Activated naive CD4-positive, alpha-beta T cell treated with anti-CD3 and anti-CD28 coated beads for 36 hours (primary cell): ENCODE measurements at regions of chr14 and their contacts with region 1.

Region 1: GRCh38 chr14:23379366-23380196 is 2.7 kb downstream of the CMTM5 start:
- DNase-seq: peak; percentile 66
- H3K4me3 Mint-ChIP-seq: no peak overlapping the region
- H3K27ac Mint-ChIP-seq: no peak overlapping the region
- H3K4me1 Mint-ChIP-seq: no peaks in the 10 kb centered on the region
- H3K27me3 Mint-ChIP-seq: no peaks in the 10 kb centered on the region

Region 2: GRCh38 chr14:23259426-23259825 is 120.2 kb before region 1 on chr14:
- CTCF ChIA-PET with region 1: interaction called, 27 read pairs
- intact Hi-C with region 1: no loop called
- DNase-seq: no peak
- H3K4me3 Mint-ChIP-seq: no peak overlapping the region
- H3K27ac Mint-ChIP-seq: no peak overlapping the region
- H3K4me1 Mint-ChIP-seq: no peaks in the 10 kb centered on the region
- H3K27me3 Mint-ChIP-seq: peaks cover 14% of the 10 kb centered on the region

Region 3: DNA sequence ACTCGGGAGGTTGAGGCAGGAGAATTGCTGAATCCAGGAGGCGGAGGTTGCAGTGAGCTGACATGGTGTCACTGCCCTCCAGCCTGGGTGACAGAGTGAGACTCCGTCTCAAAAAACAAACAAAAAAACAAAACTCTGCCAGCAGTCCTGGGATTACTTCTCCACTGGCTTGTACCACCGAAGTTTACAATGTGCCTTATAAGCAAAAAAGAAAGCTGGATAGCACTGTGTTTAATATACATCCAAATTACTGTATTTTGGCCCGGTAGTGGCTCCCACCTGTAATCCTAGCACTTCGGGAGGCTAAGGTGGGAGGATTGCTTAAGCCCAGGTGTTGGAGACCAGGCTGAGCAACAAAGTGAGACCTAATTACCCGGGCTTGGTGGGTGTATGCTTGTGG is 110.4 kb before region 1 on chr14:
- CTCF ChIA-PET with region 1: interaction called, 27 read pairs
- intact Hi-C with region 1: loop called (anchors 1 kb)
- DNase-seq: no peak
- H3K4me3 Mint-ChIP-seq: no peak overlapping the region
- H3K27ac Mint-ChIP-seq: no peak overlapping the region
- H3K4me1 Mint-ChIP-seq: no peaks in the 10 kb centered on the region
- H3K27me3 Mint-ChIP-seq: no peaks in the 10 kb centered on the region

Region 4: DNA sequence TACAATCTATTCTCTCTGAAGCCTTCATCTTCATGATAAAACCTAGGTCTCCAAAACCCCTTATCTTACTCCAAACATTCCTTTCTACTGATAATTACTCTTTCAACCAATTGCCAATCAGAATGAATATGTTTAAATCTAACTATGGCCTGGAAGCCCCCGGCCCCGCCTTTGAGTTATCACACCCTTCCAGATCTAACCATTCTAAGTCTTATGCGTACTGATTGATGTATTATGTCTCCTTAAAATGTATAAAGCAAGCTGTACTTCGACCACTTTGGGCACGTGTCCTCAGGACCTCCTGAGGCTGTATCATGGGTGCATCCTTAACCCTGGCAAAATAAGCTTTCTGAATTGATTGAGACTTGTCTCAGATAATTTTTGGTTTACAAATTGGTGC is 44.0 kb before region 1 on chr14:
- CTCF ChIA-PET with region 1: interaction called, 76 read pairs
- intact Hi-C with region 1: no loop called
- DNase-seq: no peak
- H3K4me3 Mint-ChIP-seq: no peak overlapping the region
- H3K27ac Mint-ChIP-seq: no peak overlapping the region
- H3K4me1 Mint-ChIP-seq: no peaks in the 10 kb centered on the region
- H3K27me3 Mint-ChIP-seq: peaks cover 6% of the 10 kb centered on the region

Region 5: DNA sequence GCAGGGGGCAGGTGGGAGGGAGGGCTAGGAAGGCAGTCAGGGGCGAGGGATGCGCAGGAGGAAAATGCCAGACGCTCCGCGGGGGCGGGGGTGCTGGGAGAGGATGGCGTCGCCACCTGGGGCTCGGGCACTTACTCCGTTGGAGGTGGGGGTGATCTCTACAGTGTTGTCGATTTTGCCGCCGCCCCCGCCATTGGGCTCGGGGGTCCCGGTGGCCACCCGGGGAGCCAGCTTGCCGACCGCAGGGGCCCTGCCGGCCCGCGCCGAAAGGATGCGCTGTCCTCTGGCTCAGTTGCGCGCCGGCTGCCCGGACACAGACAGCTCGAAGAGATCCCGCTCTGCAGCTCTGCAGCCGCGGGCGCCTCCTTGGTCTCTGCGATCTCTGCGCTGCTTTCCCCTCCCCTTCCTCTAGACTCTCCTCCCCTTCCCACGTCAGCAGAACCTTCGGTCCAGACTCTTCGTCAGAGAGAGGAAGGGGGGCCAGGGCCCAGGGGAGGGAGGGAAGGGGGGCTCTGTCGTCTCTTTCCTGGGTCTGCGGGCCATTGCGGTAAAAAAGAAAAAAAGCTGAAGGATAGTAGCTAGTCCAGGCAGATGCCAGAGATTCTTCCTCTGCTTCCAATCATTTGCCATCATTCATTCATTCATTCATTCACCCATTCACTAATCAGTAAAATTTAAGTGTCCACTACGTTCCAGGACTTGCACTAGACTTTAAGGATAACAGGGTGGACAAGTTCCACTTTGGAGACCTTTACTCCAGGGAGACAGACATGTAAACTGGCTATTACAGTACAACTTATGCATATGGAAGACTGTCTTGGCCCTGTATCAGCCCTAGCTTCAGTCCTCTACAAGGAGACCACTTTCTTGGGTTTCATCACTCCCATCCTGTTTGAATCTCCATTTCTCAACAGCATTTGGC is 26.8 kb before region 1 on chr14 and contains the start of gene SLC22A17:
- CTCF ChIA-PET with region 1: interaction called, 10 read pairs
- intact Hi-C with region 1: no loop called
- DNase-seq: peak; percentile 72
- H3K4me3 Mint-ChIP-seq: peak within 1 kb of the TSS; percentile 71
- H3K27ac Mint-ChIP-seq: no peak within 1 kb of the TSS
- H3K4me1 Mint-ChIP-seq: peaks cover 6% of the 10 kb centered on the region
- H3K27me3 Mint-ChIP-seq: peaks cover 4% of the 10 kb centered on the region
- total RNA-seq, gene SLC22A17: 3.5 to 4.8 TPM